ENCODE measurements at regions of chr7 and their contacts with region 1.

Region 1: GRCh38 chr7:93551063-93551904 is 23.2 kb downstream of the CALCR start:
- DNase-seq: no peak
- H3K4me3 ChIP-seq: no peak overlapping the region
- H3K27ac ChIP-seq: no peak overlapping the region
- H3K4me1 ChIP-seq: peaks cover 0 to 2% (median 0%) of the 10 kb centered on the region in 4 experiments; a peak in 1 of 7 replicates
- H3K27me3 ChIP-seq: no peaks in the 10 kb centered on the region
- CTCF ChIP-seq: peak in 2 of 3 experiments; percentile 67 to 69; a peak in 3 of 4 replicates
- EP300 ChIP-seq: no peak
- POLR2A ChIP-seq: no peak
- RAD21 ChIP-seq: peak; percentile 81 to 82

Region 2: GRCh38 chr7:93238748-93239147 is 312.5 kb before region 1 on chr7:
- CTCF ChIA-PET with region 1: interaction called, 17 read pairs
- POLR2A ChIA-PET with region 1: no interaction called
- DNase-seq: no peak
- H3K4me3 ChIP-seq: no peak overlapping the region
- H3K27ac ChIP-seq: no peak overlapping the region
- H3K4me1 ChIP-seq: peaks cover 0 to under 1% (median 0%) of the 10 kb centered on the region in 4 experiments; a peak in 1 of 7 replicates
- H3K27me3 ChIP-seq: no peaks in the 10 kb centered on the region
- CTCF ChIP-seq: no peak
- EP300 ChIP-seq: no peak
- POLR2A ChIP-seq: no peak
- RAD21 ChIP-seq: no peak

Region 3: GRCh38 chr7:93245525-93246432 is 305.5 kb before region 1 on chr7:
- CTCF ChIA-PET with region 1: interaction called, 63 read pairs
- POLR2A ChIA-PET with region 1: no interaction called
- DNase-seq: no peak
- H3K4me3 ChIP-seq: no peak overlapping the region
- H3K27ac ChIP-seq: no peak overlapping the region
- H3K4me1 ChIP-seq: no peaks in the 10 kb centered on the region
- H3K27me3 ChIP-seq: no peaks in the 10 kb centered on the region
- CTCF ChIP-seq: peak in 2 of 3 experiments; percentile 20 to 23; a peak in 2 of 4 replicates
- EP300 ChIP-seq: no peak
- POLR2A ChIP-seq: no peak
- RAD21 ChIP-seq: peak; percentile 63 to 71

Region 4: DNA sequence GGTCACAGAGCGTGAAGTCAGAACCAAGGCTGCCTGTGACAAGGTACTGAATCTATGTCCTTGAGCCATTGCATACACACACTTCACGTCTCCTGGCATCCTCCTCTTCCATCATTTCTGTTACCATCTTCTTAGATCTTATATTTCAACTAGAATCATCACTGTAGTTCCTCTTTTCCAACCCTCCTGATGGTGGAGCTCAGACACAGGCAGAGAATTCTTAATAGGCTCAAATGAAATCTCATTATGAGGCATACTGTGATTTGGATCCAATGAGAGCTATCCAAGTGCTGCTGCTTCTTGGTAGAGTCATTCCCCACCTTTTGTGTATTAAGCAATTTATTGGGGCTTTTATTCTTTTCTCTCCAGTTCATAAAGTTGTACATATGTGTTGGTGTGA is 89.9 kb before region 1 on chr7:
- CTCF ChIA-PET with region 1: interaction called, 35 read pairs
- POLR2A ChIA-PET with region 1: no interaction called
- DNase-seq: no peak
- H3K4me3 ChIP-seq: no peak overlapping the region
- H3K27ac ChIP-seq: no peak overlapping the region
- H3K4me1 ChIP-seq: peaks cover 0 to 2% (median 0%) of the 10 kb centered on the region in 4 experiments; a peak in 1 of 7 replicates
- H3K27me3 ChIP-seq: no peaks in the 10 kb centered on the region
- CTCF ChIP-seq: peak in 2 of 3 experiments; percentile 45 to 48; a peak in 2 of 4 replicates
- EP300 ChIP-seq: no peak
- POLR2A ChIP-seq: no peak
- RAD21 ChIP-seq: peak; percentile 80

Region 5: GRCh38 chr7:93530701-93531100 is 20.6 kb before region 1 on chr7:
- CTCF ChIA-PET with region 1: interaction called, 23 read pairs
- POLR2A ChIA-PET with region 1: no interaction called
- DNase-seq: no peak
- H3K4me3 ChIP-seq: no peak overlapping the region
- H3K27ac ChIP-seq: no peak overlapping the region
- H3K4me1 ChIP-seq: no peaks in the 10 kb centered on the region
- H3K27me3 ChIP-seq: no peaks in the 10 kb centered on the region
- CTCF ChIP-seq: no peak
- EP300 ChIP-seq: no peak
- POLR2A ChIP-seq: no peak
- RAD21 ChIP-seq: no peak